ENCODE measurements at regions of chr10 and their contacts with region 1.

Region 1: GRCh38 chr10:500876-501275 is 188.6 kb downstream of the DIP2C start:
- DNase-seq: no peak
- H3K4me3 ChIP-seq: no peak overlapping the region
- H3K27ac ChIP-seq: peak overlapping the region in 3 of 4 donors; percentile 32 to 46 (median 32)
- H3K4me1 ChIP-seq: peaks cover 0 to 16% (median 4%) of the 10 kb centered on the region in 4 donors
- H3K27me3 ChIP-seq: no peaks in the 10 kb centered on the region
- CTCF ChIP-seq: no peak
- EP300 ChIP-seq: no peak
- POLR2A ChIP-seq: no peak

Region 2: GRCh38 chr10:794466-794865 is 293.6 kb after region 1 on chr10:
- in situ Hi-C with region 1: loop called (anchors 10 to 25 kb)
- intact Hi-C with region 1: loop called (anchors 10 kb)
- DNase-seq: no peak
- H3K4me3 ChIP-seq: no peak overlapping the region
- H3K27ac ChIP-seq: no peak overlapping the region
- H3K4me1 ChIP-seq: peaks cover 0 to 6% (median 5%) of the 10 kb centered on the region in 4 donors
- H3K27me3 ChIP-seq: no peaks in the 10 kb centered on the region
- CTCF ChIP-seq: peak in 1 of 5 experiments; percentile 20
- EP300 ChIP-seq: no peak
- POLR2A ChIP-seq: no peak